HCT116 (cell line): ENCODE measurements at regions of chr12 and their contacts with region 1.

Region 1: GRCh38 chr12:12376646-12377448 is 20.0 kb downstream of the BORCS5 start:
- DNase-seq: peak; percentile 65
- ATAC-seq: peak; percentile 88
- H3K4me3 ChIP-seq: no peak overlapping the region
- H3K27ac ChIP-seq: no peak overlapping the region
- H3K4me1 ChIP-seq: no peaks in the 10 kb centered on the region
- H3K27me3 ChIP-seq: no peaks in the 10 kb centered on the region
- CTCF ChIP-seq: peak; percentile 49 to 91 (median 81)
- POLR2A ChIP-seq: no peak
- RAD21 ChIP-seq: peak; percentile 93

Region 2: DNA sequence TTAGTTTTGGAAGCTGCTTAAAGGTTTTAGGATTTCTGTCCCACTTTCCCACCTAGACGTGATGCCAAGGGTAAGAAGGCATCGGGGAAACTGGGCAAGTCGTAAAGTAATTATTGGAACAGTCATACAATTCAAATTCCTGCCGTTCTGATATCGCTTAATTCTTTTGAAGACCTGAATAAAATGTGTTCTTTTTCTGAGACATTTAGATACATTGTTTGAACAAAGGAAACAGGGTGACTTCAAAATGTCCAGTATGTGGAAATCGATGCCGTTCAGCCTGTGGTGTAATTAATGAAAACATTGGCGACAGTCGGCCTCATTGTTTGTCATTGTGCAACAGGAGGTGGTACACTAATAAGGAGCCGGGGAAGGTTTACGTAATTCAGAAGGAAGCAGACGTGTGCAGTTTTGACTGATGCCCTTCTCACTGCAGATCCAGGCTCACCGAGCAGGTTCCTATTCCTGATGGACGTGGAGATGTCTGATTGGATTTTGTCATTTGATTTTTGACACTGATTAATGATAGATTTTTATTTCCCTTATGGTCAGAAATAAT is 72.7 kb after region 1 on chr12:
- CTCF ChIA-PET with region 1: no interaction called
- POLR2A ChIA-PET with region 1: no interaction called
- RAD21 ChIA-PET with region 1: no interaction called
- intact Hi-C with region 1: no loop called
- DNase-seq: no peak
- ATAC-seq: no peak
- H3K4me3 ChIP-seq: no peak overlapping the region
- H3K27ac ChIP-seq: no peak overlapping the region
- H3K4me1 ChIP-seq: no peaks in the 10 kb centered on the region
- H3K27me3 ChIP-seq: no peaks in the 10 kb centered on the region
- CTCF ChIP-seq: no peak
- POLR2A ChIP-seq: no peak
- RAD21 ChIP-seq: no peak

Region 3: GRCh38 chr12:12529783-12530421 is 153.1 kb after region 1 on chr12:
- CTCF ChIA-PET with region 1: no interaction called
- POLR2A ChIA-PET with region 1: no interaction called
- RAD21 ChIA-PET with region 1: no interaction called
- intact Hi-C with region 1: no loop called
- DNase-seq: no peak
- ATAC-seq: no peak
- H3K4me3 ChIP-seq: no peak overlapping the region
- H3K27ac ChIP-seq: no peak overlapping the region
- H3K4me1 ChIP-seq: peaks cover 13 to 18% of the 10 kb centered on the region in 2 experiments
- H3K27me3 ChIP-seq: no peaks in the 10 kb centered on the region
- CTCF ChIP-seq: no peak
- POLR2A ChIP-seq: no peak
- RAD21 ChIP-seq: no peak

Region 4: GRCh38 chr12:12661086-12661485 is 284.2 kb after region 1 on chr12:
- CTCF ChIA-PET with region 1: interaction called, 7 read pairs
- POLR2A ChIA-PET with region 1: no interaction called
- RAD21 ChIA-PET with region 1: no interaction called
- intact Hi-C with region 1: loop called (anchors 1 kb)
- DNase-seq: no peak
- ATAC-seq: no peak
- H3K4me3 ChIP-seq: no peak overlapping the region
- H3K27ac ChIP-seq: no peak overlapping the region
- H3K4me1 ChIP-seq: no peaks in the 10 kb centered on the region
- H3K27me3 ChIP-seq: no peaks in the 10 kb centered on the region
- CTCF ChIP-seq: no peak
- POLR2A ChIP-seq: no peak
- RAD21 ChIP-seq: no peak

Region 5: DNA sequence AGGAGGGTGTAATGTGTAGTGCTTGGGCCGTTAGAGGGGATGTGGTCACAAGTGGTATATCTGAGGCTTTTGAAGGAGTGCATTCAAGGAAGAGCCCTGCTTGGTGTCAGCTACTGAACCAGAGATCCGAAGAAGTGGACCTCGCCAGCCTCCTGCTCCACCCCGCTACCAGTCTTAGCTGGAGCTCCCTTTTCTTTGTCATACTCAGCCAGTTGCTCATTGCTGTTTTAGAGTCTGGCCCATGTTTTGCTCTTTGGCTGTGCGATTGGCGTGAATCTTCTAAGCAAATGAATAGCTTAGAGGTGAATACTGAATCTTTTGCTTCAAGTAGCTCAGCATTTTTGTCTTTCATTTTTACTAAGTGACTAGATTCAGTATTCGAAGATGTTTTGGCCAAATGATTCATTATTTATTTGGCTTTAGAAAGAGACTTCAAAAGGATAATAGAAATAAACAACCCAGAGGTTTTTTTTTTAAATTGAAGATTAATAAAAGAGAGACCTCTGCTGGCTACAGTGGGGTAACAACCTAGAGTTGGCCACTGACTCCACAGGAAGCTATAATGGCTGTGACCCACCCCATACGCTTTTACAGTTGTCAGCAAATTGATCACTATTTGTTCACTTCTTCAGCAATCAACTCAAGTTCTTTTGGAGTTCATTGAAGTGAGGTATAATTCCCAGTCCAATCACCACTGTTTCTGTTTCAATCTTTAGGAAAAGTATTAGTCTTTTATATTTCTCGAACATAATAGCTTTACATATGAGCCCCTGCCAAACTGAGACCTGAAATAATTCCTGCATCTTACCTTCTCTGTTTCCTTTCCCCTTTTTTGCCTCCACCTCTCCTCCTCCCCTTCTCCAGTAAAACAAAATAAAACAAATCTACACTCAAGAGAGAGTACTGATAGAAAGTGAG is 360.2 kb after region 1 on chr12:
- CTCF ChIA-PET with region 1: interaction called, 12 read pairs
- POLR2A ChIA-PET with region 1: no interaction called
- RAD21 ChIA-PET with region 1: interaction called in 1 of 2 experiments, 6 read pairs
- intact Hi-C with region 1: no loop called
- DNase-seq: no peak
- ATAC-seq: peak; percentile 89
- H3K4me3 ChIP-seq: no peak overlapping the region
- H3K27ac ChIP-seq: no peak overlapping the region
- H3K4me1 ChIP-seq: peaks cover 0 to 10% of the 10 kb centered on the region in 2 experiments; a peak in 2 of 4 replicates
- H3K27me3 ChIP-seq: no peaks in the 10 kb centered on the region
- CTCF ChIP-seq: peak; percentile 40 to 68 (median 59); a peak in 5 of 6 replicates
- POLR2A ChIP-seq: no peak
- RAD21 ChIP-seq: peak; percentile 59